Activated naive CD4-positive, alpha-beta T cell treated with anti-CD3 and anti-CD28 coated beads, Interleukin-2, amount 10 ng/mL, durations not matched to agents 7 days and 5 days (primary cell): ENCODE measurements at regions of chr12 and their contacts with region 1.

Region 1: GRCh38 chr12:108950991-108951739 is 69.7 kb downstream of the SVOP start:
- DNase-seq: peak; percentile 81
- H3K4me3 Mint-ChIP-seq: no peak overlapping the region
- H3K27ac Mint-ChIP-seq: no peak overlapping the region
- H3K4me1 Mint-ChIP-seq: peaks cover 2% of the 10 kb centered on the region
- H3K27me3 Mint-ChIP-seq: peaks cover 23% of the 10 kb centered on the region

Region 2: DNA sequence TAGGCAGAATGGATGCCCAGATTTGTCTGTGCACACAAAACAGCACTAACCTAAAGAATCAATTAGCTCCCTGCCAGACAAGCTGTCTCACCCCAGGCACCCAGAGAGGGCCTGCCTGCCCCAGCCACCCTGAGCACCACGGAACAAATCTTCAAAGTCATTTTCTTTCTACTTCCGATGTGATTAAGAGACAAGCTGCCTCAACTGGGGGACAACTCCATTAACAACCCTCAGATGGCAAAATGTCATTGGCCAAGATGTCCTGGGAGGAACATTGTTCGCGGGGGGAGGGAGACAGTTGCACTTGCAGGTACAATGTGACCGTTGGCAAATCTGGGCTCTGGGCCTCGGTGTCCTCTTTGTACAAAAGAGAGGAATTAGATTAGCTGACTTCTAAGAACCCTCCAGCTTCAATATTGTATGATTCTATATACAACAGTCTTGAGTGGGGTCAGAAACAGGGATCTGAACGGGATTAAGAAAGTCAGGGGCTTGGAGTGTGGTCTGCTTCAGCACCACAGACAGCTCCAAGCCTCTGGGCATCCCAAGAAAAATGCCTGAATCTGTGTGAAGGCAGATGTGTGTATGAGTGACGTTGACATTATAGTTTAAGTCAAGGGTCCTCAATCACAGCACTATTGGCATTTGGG is 569.3 kb before region 1 on chr12:
- CTCF ChIA-PET with region 1: no interaction called
- DNase-seq: no peak
- H3K4me3 Mint-ChIP-seq: no peak overlapping the region
- H3K27ac Mint-ChIP-seq: no peak overlapping the region
- H3K4me1 Mint-ChIP-seq: no peaks in the 10 kb centered on the region
- H3K27me3 Mint-ChIP-seq: peaks cover 7% of the 10 kb centered on the region

Region 3: DNA sequence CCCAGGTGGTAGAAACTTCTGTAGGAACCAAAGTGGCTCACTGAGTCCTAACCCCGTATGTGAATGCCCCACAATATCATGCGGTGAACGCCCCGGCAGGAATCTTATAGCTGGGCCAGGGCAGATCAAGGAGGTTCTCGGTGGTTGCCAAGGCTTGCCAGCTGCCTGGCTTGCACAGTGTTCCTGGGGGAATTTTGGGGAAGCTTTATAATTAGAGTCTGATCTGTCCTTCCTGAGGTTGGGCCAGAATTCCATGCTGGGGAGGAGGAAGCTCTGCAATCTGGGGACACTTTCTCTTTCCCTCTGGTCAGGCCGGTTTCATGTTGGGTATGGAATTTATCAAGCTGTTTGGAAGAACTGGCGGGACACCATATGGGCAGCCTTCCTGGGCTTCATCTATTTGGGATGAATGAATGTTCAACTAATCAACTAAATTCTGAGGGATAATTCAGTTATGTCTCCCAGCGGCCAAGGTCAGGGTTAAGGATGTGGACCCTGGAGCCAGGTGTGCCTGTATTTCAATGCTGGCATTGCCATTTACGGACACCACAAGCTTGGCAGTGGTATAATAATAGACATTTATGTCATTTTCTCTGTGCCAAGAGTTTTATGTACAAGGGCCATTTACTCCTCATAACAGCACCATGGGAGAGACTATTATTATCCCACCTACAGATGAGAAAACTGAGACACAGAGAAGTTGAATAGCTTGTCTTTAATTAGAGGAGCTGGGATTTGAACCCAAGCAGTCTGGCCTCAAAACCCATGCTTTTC is 15.4 kb after region 1 on chr12:
- CTCF ChIA-PET with region 1: interaction called, 10 read pairs
- DNase-seq: no peak
- H3K4me3 Mint-ChIP-seq: no peak overlapping the region
- H3K27ac Mint-ChIP-seq: no peak overlapping the region
- H3K4me1 Mint-ChIP-seq: no peaks in the 10 kb centered on the region
- H3K27me3 Mint-ChIP-seq: peaks cover 15% of the 10 kb centered on the region

Region 4: GRCh38 chr12:109377139-109377685 is 426.0 kb after region 1 on chr12:
- CTCF ChIA-PET with region 1: no interaction called
- DNase-seq: no peak
- H3K4me3 Mint-ChIP-seq: no peak overlapping the region
- H3K27ac Mint-ChIP-seq: no peak overlapping the region
- H3K4me1 Mint-ChIP-seq: no peaks in the 10 kb centered on the region
- H3K27me3 Mint-ChIP-seq: peaks cover 15% of the 10 kb centered on the region